PC-3 (cell line): ENCODE measurements at regions of chr7 and their contacts with region 1.

Region 1: DNA sequence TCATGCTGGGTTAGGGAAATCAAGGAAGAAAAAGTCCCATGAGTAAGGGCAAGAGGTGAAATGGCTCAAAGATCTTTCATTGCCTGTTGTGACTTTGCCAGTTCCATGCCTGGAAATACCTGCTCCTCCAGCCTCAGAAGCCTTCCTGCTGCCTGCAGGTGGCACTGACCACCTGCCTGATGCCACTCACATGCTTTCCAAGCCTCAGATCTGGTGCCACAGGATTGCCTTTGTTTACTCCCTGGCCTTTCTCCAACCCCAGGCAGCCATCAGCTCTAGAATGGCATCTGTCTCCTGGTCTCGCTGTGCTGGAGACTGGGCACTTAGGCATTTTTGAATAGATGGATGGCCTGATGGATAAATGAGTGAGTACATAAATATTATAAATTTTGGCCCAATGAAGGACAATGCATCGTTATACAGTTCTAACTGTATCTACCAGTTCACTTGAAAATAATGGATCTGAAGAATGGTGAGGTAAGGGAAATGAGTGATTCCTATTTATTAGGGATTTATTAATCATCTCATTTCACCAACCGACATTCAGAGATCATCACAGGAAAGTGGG is 657.2 kb downstream of the INHBA start:
- DNase-seq: peak; percentile 87
- ATAC-seq: peak; percentile 76
- H3K4me3 ChIP-seq: no peak overlapping the region
- H3K27ac ChIP-seq: peak overlapping the region; percentile 96
- H3K4me1 ChIP-seq: peaks cover 37% of the 10 kb centered on the region
- H3K27me3 ChIP-seq: no peaks in the 10 kb centered on the region
- CTCF ChIP-seq: peak; percentile 83

Region 2: GRCh38 chr7:40329601-40330153 is 716.0 kb before region 1 on chr7:
- CTCF ChIA-PET with region 1: no interaction called
- POLR2A ChIA-PET with region 1: no interaction called
- intact Hi-C with region 1: loop called (anchors 5 kb)
- DNase-seq: peak; percentile 75
- ATAC-seq: peak; percentile 62
- H3K4me3 ChIP-seq: no peak overlapping the region
- H3K27ac ChIP-seq: no peak overlapping the region
- H3K4me1 ChIP-seq: no peaks in the 10 kb centered on the region
- H3K27me3 ChIP-seq: no peaks in the 10 kb centered on the region
- CTCF ChIP-seq: peak; percentile 77

Region 3: DNA sequence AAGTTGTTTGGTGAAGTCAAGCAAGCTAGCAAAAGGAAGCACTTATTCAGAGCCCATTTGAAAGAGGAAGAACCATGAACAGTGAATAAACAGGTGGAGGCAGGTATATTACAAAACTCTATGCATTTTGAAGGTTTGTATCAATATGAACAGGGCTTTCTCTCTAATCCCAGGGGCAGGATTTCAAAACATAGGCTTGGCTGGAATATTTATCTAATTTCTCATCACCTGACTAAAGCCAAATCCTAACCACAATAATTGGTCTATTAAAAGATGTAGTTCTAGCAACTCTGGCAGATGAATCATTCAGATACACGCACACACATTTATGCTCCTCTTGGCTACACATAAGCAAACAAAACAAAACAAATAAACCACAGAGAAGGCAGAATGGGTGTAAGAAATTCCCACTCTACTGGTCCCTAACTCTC is 102.9 kb after region 1 on chr7:
- CTCF ChIA-PET with region 1: no interaction called
- POLR2A ChIA-PET with region 1: no interaction called
- intact Hi-C with region 1: loop called (anchors 2 kb)
- DNase-seq: peak; percentile 97
- ATAC-seq: peak; percentile 85
- H3K4me3 ChIP-seq: no peak overlapping the region
- H3K27ac ChIP-seq: peak overlapping the region; percentile 99
- H3K4me1 ChIP-seq: peaks cover 48% of the 10 kb centered on the region
- H3K27me3 ChIP-seq: no peaks in the 10 kb centered on the region
- CTCF ChIP-seq: no peak

Region 4: DNA sequence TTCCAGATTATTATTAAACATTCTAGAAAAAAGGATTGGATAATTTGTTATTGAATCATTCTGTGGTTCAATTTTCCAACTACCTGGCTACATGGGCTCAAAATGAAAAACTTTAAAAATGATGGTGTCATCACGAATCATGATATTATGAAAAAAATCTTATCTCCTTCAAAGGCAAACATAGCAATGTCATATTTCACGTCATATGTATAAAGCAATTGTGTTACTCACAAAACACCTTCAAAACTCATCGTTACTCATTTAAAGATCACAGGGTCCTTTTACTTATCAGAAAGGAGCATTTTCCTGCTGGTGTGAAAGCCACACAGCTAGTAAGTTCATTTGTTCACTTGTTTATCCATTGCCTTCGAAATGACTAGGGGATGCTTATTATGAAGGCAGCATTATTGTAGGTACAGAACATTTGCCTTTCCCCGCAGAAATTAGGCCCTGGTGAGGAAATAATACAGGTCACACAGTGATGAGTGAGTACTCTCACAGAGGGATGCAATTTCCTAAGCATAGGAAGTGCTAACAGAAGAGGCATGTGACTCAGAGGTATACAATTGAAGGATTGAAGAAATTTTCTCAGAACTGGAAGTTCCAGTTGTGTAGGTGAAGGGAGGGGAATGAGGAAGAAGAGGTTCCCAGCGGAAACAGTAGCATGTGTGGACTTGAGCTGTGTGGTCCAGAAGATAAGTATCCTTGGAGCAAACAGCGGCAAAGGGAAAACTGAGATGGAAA is 178.6 kb after region 1 on chr7:
- CTCF ChIA-PET with region 1: no interaction called
- POLR2A ChIA-PET with region 1: no interaction called
- intact Hi-C with region 1: loop called (anchors 10 kb)
- DNase-seq: peak; percentile 98
- ATAC-seq: peak; percentile 85
- H3K4me3 ChIP-seq: no peak overlapping the region
- H3K27ac ChIP-seq: peak overlapping the region; percentile 98
- H3K4me1 ChIP-seq: peaks cover 38% of the 10 kb centered on the region
- H3K27me3 ChIP-seq: no peaks in the 10 kb centered on the region
- CTCF ChIP-seq: no peak

Region 5: GRCh38 chr7:41247143-41247865 is 201.7 kb after region 1 on chr7:
- CTCF ChIA-PET with region 1: no interaction called
- POLR2A ChIA-PET with region 1: no interaction called
- intact Hi-C with region 1: loop called (anchors 1 kb)
- DNase-seq: peak; percentile 96
- ATAC-seq: peak; percentile 92
- H3K4me3 ChIP-seq: no peak overlapping the region
- H3K27ac ChIP-seq: peak overlapping the region; percentile 97
- H3K4me1 ChIP-seq: peaks cover 38% of the 10 kb centered on the region
- H3K27me3 ChIP-seq: no peaks in the 10 kb centered on the region
- CTCF ChIP-seq: no peak

Region 6: DNA sequence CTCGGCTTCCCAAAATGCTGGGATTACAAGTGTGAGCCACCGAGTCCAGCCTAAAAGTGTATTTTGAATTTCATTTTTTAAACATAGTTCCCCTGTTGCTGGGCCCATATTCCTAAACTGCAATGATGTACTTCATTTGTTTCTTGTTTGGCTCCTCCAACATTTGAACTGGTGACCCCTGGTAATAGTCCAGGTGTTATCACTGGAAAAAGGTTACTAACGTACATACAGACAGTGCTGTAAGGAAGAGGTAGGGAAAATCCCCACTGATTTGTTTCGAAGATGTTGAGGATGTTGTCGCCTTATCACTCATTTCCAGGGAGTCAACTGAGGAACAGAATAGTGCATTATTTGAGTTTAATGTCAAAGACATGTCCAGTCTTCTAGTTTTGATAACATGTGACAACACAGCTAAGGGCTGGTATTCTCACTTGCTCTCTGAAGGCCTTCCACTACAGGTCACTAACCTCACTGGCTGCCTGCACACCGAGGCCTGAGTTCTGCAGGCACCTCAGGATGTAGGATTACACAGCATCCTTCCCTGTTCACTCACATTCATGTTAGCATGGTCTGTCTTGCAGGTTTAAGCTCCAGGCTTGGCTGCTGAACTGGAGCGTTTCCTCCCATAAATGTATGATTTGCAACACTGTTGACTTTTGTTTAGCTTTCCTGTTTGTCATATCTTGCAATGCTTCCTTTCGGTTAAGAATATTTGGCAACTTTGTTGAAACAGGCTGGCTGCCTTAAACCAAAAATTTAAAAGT is 294.5 kb after region 1 on chr7:
- CTCF ChIA-PET with region 1: no interaction called
- POLR2A ChIA-PET with region 1: no interaction called
- intact Hi-C with region 1: loop called (anchors 1 kb)
- DNase-seq: peak; percentile 83
- ATAC-seq: peak; percentile 99
- H3K4me3 ChIP-seq: no peak overlapping the region
- H3K27ac ChIP-seq: peak overlapping the region; percentile 73
- H3K4me1 ChIP-seq: peaks cover 21% of the 10 kb centered on the region
- H3K27me3 ChIP-seq: no peaks in the 10 kb centered on the region
- CTCF ChIP-seq: no peak

Region 7: DNA sequence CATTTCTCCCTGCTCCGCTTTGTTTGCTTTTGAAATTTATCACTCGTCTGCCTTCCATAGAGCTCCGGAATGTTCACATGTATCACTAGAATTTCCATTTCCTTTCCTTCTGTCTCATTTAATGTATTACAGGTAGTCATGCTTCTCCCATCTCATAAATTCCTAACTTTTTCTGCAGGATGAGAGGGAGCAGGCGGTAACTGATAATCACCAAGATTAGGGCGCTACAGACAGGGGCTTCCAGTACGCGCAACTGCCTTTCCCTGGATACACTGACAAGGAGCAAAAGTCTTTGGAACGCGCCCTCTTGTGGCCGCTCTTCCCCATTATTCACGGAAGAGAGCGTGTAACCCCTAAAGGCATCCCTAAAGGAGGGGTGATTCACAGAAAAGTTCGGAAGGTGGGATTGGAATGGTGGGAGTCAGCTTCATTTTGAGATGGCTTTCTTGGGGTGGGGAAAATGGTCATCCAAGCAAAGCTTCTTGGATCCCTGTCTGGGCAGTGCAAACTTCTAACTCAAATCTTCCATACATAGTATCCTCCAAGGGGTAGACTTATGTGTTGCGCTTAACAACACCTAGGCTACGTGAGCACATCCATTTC is 650.8 kb after region 1 on chr7:
- CTCF ChIA-PET with region 1: no interaction called
- POLR2A ChIA-PET with region 1: no interaction called
- intact Hi-C with region 1: loop called (anchors 2 kb)
- DNase-seq: peak; percentile 88
- ATAC-seq: peak; percentile 56
- H3K4me3 ChIP-seq: peak overlapping the region; percentile 95
- H3K27ac ChIP-seq: peak overlapping the region; percentile 94
- H3K4me1 ChIP-seq: peaks cover 27% of the 10 kb centered on the region
- H3K27me3 ChIP-seq: no peaks in the 10 kb centered on the region
- CTCF ChIP-seq: peak; percentile 90